ENCODE measurements at regions of chr1 and their contacts with region 1.

Region 1: GRCh38 chr1:61453111-61453961 is 271.6 kb downstream of the TM2D1 start:
- DNase-seq: peak; percentile 89 to 92
- ATAC-seq: peak; percentile 71 to 84 (median 74)
- H3K4me3 ChIP-seq: no peak overlapping the region
- H3K27ac ChIP-seq: peak overlapping the region; percentile 74
- H3K4me1 ChIP-seq: peaks cover 60% of the 10 kb centered on the region
- H3K27me3 ChIP-seq: no peaks in the 10 kb centered on the region
- CTCF ChIP-seq: peak; percentile 77

Region 2: GRCh38 chr1:60596791-60597747 is 856.3 kb before region 1 on chr1:
- intact Hi-C with region 1: no loop called
- DNase-seq: no peak
- ATAC-seq: no peak
- H3K4me3 ChIP-seq: no peak overlapping the region
- H3K27ac ChIP-seq: no peak overlapping the region
- H3K4me1 ChIP-seq: no peaks in the 10 kb centered on the region
- H3K27me3 ChIP-seq: no peaks in the 10 kb centered on the region
- CTCF ChIP-seq: no peak

Region 3: GRCh38 chr1:60857851-60858250 is 595.5 kb before region 1 on chr1:
- intact Hi-C with region 1: loop called in 1 of 2 experiments (anchors 10 kb)
- DNase-seq: no peak
- ATAC-seq: no peak
- H3K4me3 ChIP-seq: no peak overlapping the region
- H3K27ac ChIP-seq: no peak overlapping the region
- H3K4me1 ChIP-seq: no peaks in the 10 kb centered on the region
- H3K27me3 ChIP-seq: no peaks in the 10 kb centered on the region
- CTCF ChIP-seq: no peak

Region 4: DNA sequence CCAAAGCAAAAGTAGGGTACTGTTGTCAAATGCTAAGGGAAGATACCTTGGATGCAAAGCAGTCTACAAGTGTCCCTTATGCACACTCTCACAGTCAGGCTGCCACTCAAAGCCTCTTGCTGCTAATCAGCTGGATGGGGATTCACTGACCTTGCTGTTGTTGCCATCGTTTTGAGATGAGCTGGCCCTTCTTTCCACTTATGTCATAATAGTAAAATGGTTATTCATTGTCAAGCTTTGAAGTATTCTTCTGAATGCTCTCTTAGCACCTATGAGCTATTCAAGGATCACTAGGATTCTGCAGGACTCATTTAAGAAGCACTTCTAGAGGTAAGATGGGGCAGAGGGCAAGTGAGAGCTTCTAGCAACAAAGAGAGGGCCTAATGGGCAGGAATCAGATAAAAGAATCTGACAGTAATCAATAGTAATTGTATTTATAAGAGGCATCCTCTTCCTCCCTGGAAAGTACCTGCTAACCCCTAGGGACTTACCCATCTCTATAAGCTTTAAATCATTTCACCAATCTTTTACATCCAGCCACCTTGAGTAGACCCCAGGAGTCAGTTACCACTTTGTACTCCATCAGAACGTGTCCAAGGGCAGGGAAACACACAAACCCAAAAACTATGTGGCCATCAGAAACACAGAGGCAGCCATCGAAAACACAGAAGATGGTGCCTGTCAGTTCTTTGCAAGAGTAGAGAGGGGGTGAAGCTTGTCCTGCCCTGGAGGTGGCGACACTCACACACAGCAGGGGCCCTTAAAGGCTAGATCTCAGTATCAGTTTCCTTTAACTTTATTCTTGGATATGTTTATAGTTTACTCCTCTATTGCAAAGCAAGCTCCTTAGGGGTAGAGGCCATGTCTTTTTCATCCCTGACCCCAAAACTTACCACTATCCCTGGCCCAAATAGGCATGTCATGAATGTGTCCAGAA is 474.6 kb before region 1 on chr1:
- intact Hi-C with region 1: loop called (anchors 5 to 10 kb)
- DNase-seq: peak; percentile 20 to 59
- ATAC-seq: peak in 3 of 4 donors; percentile 67 to 91 (median 82)
- H3K4me3 ChIP-seq: no peak overlapping the region
- H3K27ac ChIP-seq: no peak overlapping the region
- H3K4me1 ChIP-seq: no peaks in the 10 kb centered on the region
- H3K27me3 ChIP-seq: peaks cover 0 to 2% (median 0%) of the 10 kb centered on the region in 3 donors
- CTCF ChIP-seq: peak; percentile 49

Region 5: GRCh38 chr1:61230523-61230922 is 222.8 kb before region 1 on chr1:
- intact Hi-C with region 1: loop called in 1 of 2 experiments (anchors 10 kb)
- DNase-seq: no peak
- ATAC-seq: no peak
- H3K4me3 ChIP-seq: no peak overlapping the region
- H3K27ac ChIP-seq: no peak overlapping the region
- H3K4me1 ChIP-seq: peaks cover 12% of the 10 kb centered on the region
- H3K27me3 ChIP-seq: no peaks in the 10 kb centered on the region
- CTCF ChIP-seq: no peak

Region 6: GRCh38 chr1:61424382-61424781 is 29.0 kb before region 1 on chr1:
- intact Hi-C with region 1: loop called in 1 of 2 experiments (anchors 1 kb)
- DNase-seq: no peak
- ATAC-seq: no peak
- H3K4me3 ChIP-seq: no peak overlapping the region
- H3K27ac ChIP-seq: no peak overlapping the region
- H3K4me1 ChIP-seq: peaks cover 23% of the 10 kb centered on the region
- H3K27me3 ChIP-seq: no peaks in the 10 kb centered on the region
- CTCF ChIP-seq: no peak